Activated naive CD4-positive, alpha-beta T cell treated with anti-CD3 and anti-CD28 coated beads, Interleukin-2, amount 10 ng/mL, durations not matched to agents 7 days and 5 days (primary cell): ENCODE measurements at regions of chr21 and their contacts with region 1.

Region 1: GRCh38 chr21:34129039-34129891 is 55.9 kb downstream of the MRPS6 start:
- DNase-seq: peak; percentile 76
- H3K4me3 Mint-ChIP-seq: peak overlapping the region; percentile 53
- H3K27ac Mint-ChIP-seq: peak overlapping the region; percentile 89
- H3K4me1 Mint-ChIP-seq: peaks cover 71% of the 10 kb centered on the region
- H3K27me3 Mint-ChIP-seq: no peaks in the 10 kb centered on the region

Region 2: DNA sequence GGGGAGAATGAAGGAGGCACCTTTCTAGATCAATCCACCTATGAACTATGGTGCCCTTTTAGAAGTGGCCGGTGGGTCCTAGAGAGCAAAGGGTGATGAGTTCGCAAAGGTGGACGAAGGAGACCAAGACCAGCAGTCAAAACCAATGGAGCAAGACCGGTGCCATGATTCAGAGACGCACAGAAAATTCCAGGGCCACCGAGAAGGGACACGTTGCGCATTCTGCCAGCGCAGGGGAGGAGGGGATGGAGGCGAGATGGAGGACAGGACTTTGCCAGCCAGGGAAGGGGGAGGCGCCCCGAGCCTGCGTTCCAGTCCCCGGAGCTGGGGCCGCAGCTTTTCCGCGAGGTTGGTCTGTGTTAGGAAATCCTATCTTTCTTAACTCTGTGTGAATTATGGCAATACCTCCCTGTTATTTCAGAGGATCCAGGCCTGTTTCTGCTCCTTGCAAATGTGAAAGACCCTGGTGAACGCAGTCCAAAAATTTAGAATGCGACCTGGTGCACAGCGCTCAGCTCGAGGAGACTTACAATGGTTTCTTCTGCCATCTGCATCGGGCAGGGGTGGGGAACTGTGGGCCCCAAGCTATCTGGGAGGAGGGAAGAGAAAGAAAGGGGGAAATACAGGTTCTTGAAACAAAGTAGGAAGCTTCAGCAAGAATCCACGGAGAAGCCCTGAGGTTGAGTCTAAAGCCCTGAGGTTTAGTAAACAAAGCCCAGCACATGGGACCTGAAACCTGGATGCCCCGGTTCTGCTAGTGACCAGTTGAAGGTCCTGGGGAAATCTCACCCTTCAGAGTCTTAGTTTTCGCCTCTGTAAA is 73.5 kb after region 1 on chr21:
- CTCF ChIA-PET with region 1: interaction called, 24 read pairs
- DNase-seq: no peak
- H3K4me3 Mint-ChIP-seq: peak overlapping the region; percentile 45
- H3K27ac Mint-ChIP-seq: no peak overlapping the region
- H3K4me1 Mint-ChIP-seq: peaks cover 46% of the 10 kb centered on the region
- H3K27me3 Mint-ChIP-seq: peaks cover 9% of the 10 kb centered on the region

Region 3: GRCh38 chr21:34351786-34352241 is 222.5 kb after region 1 on chr21:
- CTCF ChIA-PET with region 1: interaction called, 15 read pairs
- DNase-seq: peak; percentile 28
- H3K4me3 Mint-ChIP-seq: no peak overlapping the region
- H3K27ac Mint-ChIP-seq: no peak overlapping the region
- H3K4me1 Mint-ChIP-seq: peaks cover 9% of the 10 kb centered on the region
- H3K27me3 Mint-ChIP-seq: peaks cover 47% of the 10 kb centered on the region